ENCODE measurements at regions of chr13 and their contacts with region 1.

Region 1: DNA sequence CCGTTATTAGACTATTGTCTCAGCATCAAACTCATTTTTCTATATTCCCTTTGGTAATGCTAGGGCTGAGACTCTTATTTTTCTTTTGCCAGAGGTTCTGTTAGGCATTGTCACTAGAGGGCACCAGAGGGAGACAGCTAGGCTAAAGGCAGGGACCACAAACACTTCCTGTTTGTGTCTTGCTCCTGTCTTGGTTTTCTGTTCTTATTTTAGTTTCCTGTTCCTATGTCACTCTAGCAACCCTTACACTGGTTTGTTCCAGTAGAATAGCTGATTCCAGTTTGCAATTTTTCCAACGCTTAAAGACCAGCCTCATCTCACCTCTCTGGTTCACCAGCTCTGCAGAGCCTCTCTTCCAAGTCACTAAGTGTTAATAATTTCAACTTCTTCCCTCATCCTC is 772.0 kb downstream of the DIAPH3 start:
- DNase-seq: peak; percentile 44
- H3K4me3 ChIP-seq: no peak overlapping the region
- H3K27ac ChIP-seq: no peak overlapping the region
- H3K4me1 ChIP-seq: no peaks in the 10 kb centered on the region
- H3K27me3 ChIP-seq: no peaks in the 10 kb centered on the region
- CTCF ChIP-seq: peak; percentile 87 to 91

Region 2: DNA sequence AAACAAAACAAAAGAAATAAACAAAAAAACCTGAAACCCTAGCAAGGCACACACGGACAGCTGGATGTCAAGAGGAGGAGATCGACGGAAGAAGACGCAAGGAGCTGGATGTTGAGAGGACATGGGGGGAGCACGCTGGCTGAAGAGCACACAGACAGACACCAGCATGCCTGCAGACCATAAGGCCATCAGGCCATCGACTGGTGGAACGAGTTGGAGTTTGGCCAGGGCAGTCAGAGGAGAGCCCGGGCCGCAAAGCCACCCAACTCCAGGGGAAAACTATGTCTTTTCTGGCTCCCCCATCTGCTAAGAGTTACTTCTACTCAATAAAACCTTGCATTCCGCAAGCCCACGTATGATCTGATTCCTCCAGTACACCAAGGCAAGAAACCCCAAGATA is 780.6 kb before region 1 on chr13:
- CTCF ChIA-PET with region 1: no interaction called
- dilution Hi-C with region 1: no loop called
- in situ Hi-C with region 1: no loop called
- intact Hi-C with region 1: no loop called
- DNase-seq: no peak
- H3K4me3 ChIP-seq: no peak overlapping the region
- H3K27ac ChIP-seq: no peak overlapping the region
- H3K4me1 ChIP-seq: no peaks in the 10 kb centered on the region
- H3K27me3 ChIP-seq: no peaks in the 10 kb centered on the region
- CTCF ChIP-seq: no peak

Region 3: DNA sequence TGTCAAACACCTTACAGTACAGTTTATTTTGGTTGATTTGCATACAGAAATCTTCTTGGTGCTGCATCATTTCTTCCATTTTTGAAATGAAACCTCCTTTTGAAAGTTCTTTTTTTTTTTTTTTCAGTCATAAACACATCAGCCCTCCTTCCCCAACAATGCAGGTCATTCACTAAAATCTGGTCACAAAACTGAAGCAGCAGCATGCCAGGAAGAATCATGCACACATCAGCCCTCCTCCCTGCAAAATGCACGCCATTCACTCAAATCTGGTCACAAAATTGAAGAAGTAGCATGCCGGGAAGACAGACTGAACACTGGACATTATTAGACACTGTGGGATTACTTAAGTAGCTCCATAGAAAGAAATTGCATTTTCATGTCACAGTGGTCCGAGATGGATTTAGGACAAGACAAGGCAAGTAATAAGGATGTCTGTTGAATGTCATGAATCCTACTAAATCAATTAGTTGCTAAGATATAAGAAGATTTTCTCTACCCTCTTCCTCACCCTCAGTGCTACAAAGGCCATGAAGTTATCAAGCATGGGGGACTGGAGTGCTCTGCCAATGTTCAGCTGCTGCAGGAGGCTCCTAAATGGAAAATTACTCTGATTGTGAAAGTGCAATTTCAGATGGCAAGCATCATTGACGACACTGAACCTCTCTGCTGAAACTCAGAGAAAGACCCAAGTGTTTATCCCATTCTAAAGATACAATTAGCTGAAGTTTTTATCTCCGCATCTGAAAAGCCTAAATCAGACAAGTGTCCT is 141.2 kb before region 1 on chr13:
- CTCF ChIA-PET with region 1: no interaction called
- dilution Hi-C with region 1: no loop called
- in situ Hi-C with region 1: no loop called
- intact Hi-C with region 1: no loop called
- DNase-seq: no peak
- H3K4me3 ChIP-seq: no peak overlapping the region
- H3K27ac ChIP-seq: no peak overlapping the region
- H3K4me1 ChIP-seq: no peaks in the 10 kb centered on the region
- H3K27me3 ChIP-seq: no peaks in the 10 kb centered on the region
- CTCF ChIP-seq: no peak

Region 4: GRCh38 chr13:59666504-59666903 is 274.8 kb after region 1 on chr13:
- CTCF ChIA-PET with region 1: no interaction called
- dilution Hi-C with region 1: no loop called
- in situ Hi-C with region 1: no loop called
- intact Hi-C with region 1: no loop called
- DNase-seq: no peak
- H3K4me3 ChIP-seq: no peak overlapping the region
- H3K27ac ChIP-seq: no peak overlapping the region
- H3K4me1 ChIP-seq: no peaks in the 10 kb centered on the region
- H3K27me3 ChIP-seq: no peaks in the 10 kb centered on the region
- CTCF ChIP-seq: no peak

Region 5: GRCh38 chr13:59677966-59678814 is 286.5 kb after region 1 on chr13:
- CTCF ChIA-PET with region 1: no interaction called
- dilution Hi-C with region 1: no loop called
- in situ Hi-C with region 1: no loop called
- intact Hi-C with region 1: loop called (anchors 1 kb)
- DNase-seq: peak; percentile 25
- H3K4me3 ChIP-seq: no peak overlapping the region
- H3K27ac ChIP-seq: no peak overlapping the region
- H3K4me1 ChIP-seq: no peaks in the 10 kb centered on the region
- H3K27me3 ChIP-seq: no peaks in the 10 kb centered on the region
- CTCF ChIP-seq: peak; percentile 82 to 84

Region 6: GRCh38 chr13:59801107-59801880 is 409.6 kb after region 1 on chr13:
- CTCF ChIA-PET with region 1: no interaction called
- dilution Hi-C with region 1: no loop called
- in situ Hi-C with region 1: no loop called
- intact Hi-C with region 1: no loop called
- DNase-seq: no peak
- H3K4me3 ChIP-seq: no peak overlapping the region
- H3K27ac ChIP-seq: no peak overlapping the region
- H3K4me1 ChIP-seq: no peaks in the 10 kb centered on the region
- H3K27me3 ChIP-seq: no peaks in the 10 kb centered on the region
- CTCF ChIP-seq: no peak

Region 7: GRCh38 chr13:59906413-59907049 is 514.8 kb after region 1 on chr13:
- CTCF ChIA-PET with region 1: no interaction called
- dilution Hi-C with region 1: no loop called
- in situ Hi-C with region 1: loop called (anchors 25 kb)
- intact Hi-C with region 1: loop called (anchors 5 kb)
- DNase-seq: no peak
- H3K4me3 ChIP-seq: no peak overlapping the region
- H3K27ac ChIP-seq: no peak overlapping the region
- H3K4me1 ChIP-seq: no peaks in the 10 kb centered on the region
- H3K27me3 ChIP-seq: no peaks in the 10 kb centered on the region
- CTCF ChIP-seq: peak; percentile 41 to 72

Region 8: DNA sequence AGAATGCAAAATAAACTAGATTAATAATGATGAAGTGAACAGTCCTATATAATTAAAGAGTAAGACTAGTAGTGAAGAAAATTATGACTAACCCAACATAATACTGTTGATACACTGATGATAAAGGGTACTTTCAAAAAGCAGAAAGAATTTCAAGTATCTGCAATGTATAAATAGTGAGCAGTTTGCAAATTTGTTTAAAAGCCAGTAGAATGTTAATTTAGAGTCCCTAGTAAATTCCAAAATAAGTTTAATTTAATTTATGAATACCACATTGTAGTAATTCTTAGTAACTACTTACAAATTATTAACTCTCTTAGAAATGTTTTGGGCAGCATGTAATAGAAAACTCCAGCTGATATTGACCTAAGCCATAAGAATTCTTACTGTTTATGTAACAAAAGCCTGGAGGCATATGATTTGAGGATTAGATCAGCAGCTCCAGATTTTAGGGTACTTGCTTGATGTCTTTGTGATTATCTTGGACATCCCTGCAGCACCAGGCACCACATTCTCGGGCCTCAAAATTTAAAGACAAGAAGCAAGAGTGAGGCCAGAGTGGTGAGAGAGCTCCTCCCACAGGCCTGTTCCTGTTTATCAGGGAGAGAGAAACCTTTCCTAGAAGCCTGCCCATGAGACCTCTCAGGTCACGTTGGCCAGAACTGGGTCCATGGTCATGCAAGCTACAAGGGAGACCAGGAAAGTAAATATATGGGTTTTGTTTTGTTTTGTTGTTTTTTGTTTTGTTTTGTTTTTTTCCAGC is 937.7 kb after region 1 on chr13:
- CTCF ChIA-PET with region 1: no interaction called
- dilution Hi-C with region 1: no loop called
- in situ Hi-C with region 1: loop called (anchors 25 kb)
- intact Hi-C with region 1: no loop called
- DNase-seq: peak; percentile 14
- H3K4me3 ChIP-seq: no peak overlapping the region
- H3K27ac ChIP-seq: no peak overlapping the region
- H3K4me1 ChIP-seq: no peaks in the 10 kb centered on the region
- H3K27me3 ChIP-seq: peaks cover 2% of the 10 kb centered on the region
- CTCF ChIP-seq: peak; percentile 34 to 73

Region 9: DNA sequence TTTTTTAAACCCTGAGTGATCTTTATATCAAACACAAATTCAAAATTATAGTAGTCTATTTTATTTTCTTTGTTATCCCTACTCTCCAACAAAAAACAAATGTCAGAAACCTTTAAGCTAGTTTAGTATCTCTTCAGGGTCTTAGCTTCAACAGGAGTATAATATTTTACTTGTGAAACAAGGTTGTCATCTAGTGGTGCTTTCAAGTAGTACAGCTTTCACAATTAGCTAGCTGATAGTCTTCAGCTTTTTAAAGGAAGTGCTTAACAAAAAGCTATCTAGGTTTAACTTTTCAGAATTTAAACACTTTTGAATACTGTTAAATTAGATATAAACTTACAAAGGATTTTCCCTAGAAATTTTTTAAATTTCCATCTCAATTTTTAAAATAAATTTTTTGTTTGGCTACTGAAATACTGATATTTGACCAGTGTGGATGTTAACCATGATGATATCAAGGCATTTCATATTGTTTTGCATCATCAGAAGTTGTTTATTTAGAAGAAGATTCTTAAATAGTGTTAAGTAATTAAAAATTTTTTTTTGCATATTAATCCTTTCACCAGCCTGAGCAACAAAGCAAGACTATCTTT is 1039.5 kb after region 1 on chr13:
- CTCF ChIA-PET with region 1: no interaction called
- dilution Hi-C with region 1: no loop called
- in situ Hi-C with region 1: no loop called
- intact Hi-C with region 1: loop called (anchors 10 kb)
- DNase-seq: peak; percentile 46
- H3K4me3 ChIP-seq: no peak overlapping the region
- H3K27ac ChIP-seq: no peak overlapping the region
- H3K4me1 ChIP-seq: no peaks in the 10 kb centered on the region
- H3K27me3 ChIP-seq: no peaks in the 10 kb centered on the region
- CTCF ChIP-seq: peak; percentile 91 to 92